ENCODE measurements at regions of chr5 and their contacts with region 1.

Region 1: GRCh38 chr5:59756373-59757035 is 137.0 kb downstream of the PDE4D start:
- DNase-seq: no peak
- ATAC-seq: no peak
- H3K4me3 ChIP-seq: no peak overlapping the region
- H3K27ac ChIP-seq: no peak overlapping the region
- H3K4me1 ChIP-seq: no peaks in the 10 kb centered on the region
- H3K27me3 ChIP-seq: no peaks in the 10 kb centered on the region
- CTCF ChIP-seq: no peak
- POLR2A ChIP-seq: no peak
- RAD21 ChIP-seq: no peak

Region 2: DNA sequence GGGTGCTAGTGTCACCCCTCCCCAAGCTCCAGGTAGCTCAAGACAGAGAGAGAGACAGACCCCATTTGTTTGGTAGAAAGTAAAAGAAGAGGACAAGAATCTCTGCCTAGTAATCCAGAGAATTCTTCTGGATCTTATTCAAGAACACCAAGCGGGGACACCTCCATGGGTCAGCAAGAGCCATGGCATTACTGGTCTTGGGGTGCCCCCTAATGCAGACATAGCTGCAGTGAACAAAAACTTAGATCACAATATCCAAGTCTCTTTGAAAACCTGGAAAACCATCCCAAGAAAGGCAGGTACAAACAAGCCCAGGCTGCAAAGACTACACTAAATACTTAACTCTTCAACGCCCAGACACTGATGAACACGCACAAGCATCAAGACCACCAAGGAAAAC is 167.0 kb after region 1 on chr5:
- CTCF ChIA-PET with region 1: no interaction called
- POLR2A ChIA-PET with region 1: no interaction called
- dilution Hi-C with region 1: no loop called
- in situ Hi-C with region 1: no loop called
- intact Hi-C with region 1: no loop called
- DNase-seq: peak; percentile 30
- ATAC-seq: peak; percentile 61; the same call in 1 of the 2 replicates
- H3K4me3 ChIP-seq: no peak overlapping the region
- H3K27ac ChIP-seq: no peak overlapping the region
- H3K4me1 ChIP-seq: no peaks in the 10 kb centered on the region
- H3K27me3 ChIP-seq: no peaks in the 10 kb centered on the region
- CTCF ChIP-seq: peak; percentile 66
- POLR2A ChIP-seq: no peak
- RAD21 ChIP-seq: peak; percentile 77

Region 3: GRCh38 chr5:61313960-61314681 is 1557.6 kb after region 1 on chr5:
- CTCF ChIA-PET with region 1: no interaction called
- POLR2A ChIA-PET with region 1: interaction called, 11 read pairs
- dilution Hi-C with region 1: no loop called
- in situ Hi-C with region 1: no loop called
- intact Hi-C with region 1: no loop called
- DNase-seq: peak; percentile 94
- ATAC-seq: peak; percentile 83
- H3K4me3 ChIP-seq: no peak overlapping the region
- H3K27ac ChIP-seq: peak overlapping the region; percentile 44; the same call in 1 of the 2 replicates
- H3K4me1 ChIP-seq: peaks cover 19% of the 10 kb centered on the region
- H3K27me3 ChIP-seq: no peaks in the 10 kb centered on the region
- CTCF ChIP-seq: no peak
- POLR2A ChIP-seq: no peak
- RAD21 ChIP-seq: no peak

Measured in IMR-90 (cell line).